ENCODE measurements at regions of chr10 and their contacts with region 1.

Region 1: GRCh38 chr10:8498884-8499283 is 444.4 kb downstream of the GATA3 start:
- DNase-seq: no peak
- ATAC-seq: no peak
- H3K4me3 ChIP-seq: no peak overlapping the region
- H3K4me3 Mint-ChIP-seq: no peak overlapping the region
- H3K27ac ChIP-seq: no peak overlapping the region
- H3K27ac Mint-ChIP-seq: no peak overlapping the region
- H3K4me1 ChIP-seq: no peaks in the 10 kb centered on the region
- H3K4me1 Mint-ChIP-seq: no peaks in the 10 kb centered on the region
- H3K27me3 ChIP-seq: peaks cover 4% of the 10 kb centered on the region
- H3K27me3 Mint-ChIP-seq: peaks cover 31 to 60% of the 10 kb centered on the region in 2 donors
- CTCF ChIP-seq: no peak

Region 2: GRCh38 chr10:7872041-7872442 is 626.8 kb before region 1 on chr10:
- intact Hi-C with region 1: loop called (anchors 10 kb)
- DNase-seq: peak in 1 of 2 donors; percentile 60
- ATAC-seq: peak in 2 of 3 donors; percentile 40 to 50
- H3K4me3 ChIP-seq: no peak overlapping the region
- H3K4me3 Mint-ChIP-seq: peak overlapping the region; percentile 73
- H3K27ac ChIP-seq: no peak overlapping the region
- H3K27ac Mint-ChIP-seq: peak overlapping the region in 1 of 2 donors; percentile 34
- H3K4me1 ChIP-seq: no peaks in the 10 kb centered on the region
- H3K4me1 Mint-ChIP-seq: peaks cover 13% of the 10 kb centered on the region in 2 donors
- H3K27me3 ChIP-seq: no peaks in the 10 kb centered on the region
- H3K27me3 Mint-ChIP-seq: no peaks in the 10 kb centered on the region
- CTCF ChIP-seq: peak; percentile 94